Heart left ventricle (tissue), 16 donors: ENCODE measurements at regions of chr1 and their contacts with region 1.

Region 1: DNA sequence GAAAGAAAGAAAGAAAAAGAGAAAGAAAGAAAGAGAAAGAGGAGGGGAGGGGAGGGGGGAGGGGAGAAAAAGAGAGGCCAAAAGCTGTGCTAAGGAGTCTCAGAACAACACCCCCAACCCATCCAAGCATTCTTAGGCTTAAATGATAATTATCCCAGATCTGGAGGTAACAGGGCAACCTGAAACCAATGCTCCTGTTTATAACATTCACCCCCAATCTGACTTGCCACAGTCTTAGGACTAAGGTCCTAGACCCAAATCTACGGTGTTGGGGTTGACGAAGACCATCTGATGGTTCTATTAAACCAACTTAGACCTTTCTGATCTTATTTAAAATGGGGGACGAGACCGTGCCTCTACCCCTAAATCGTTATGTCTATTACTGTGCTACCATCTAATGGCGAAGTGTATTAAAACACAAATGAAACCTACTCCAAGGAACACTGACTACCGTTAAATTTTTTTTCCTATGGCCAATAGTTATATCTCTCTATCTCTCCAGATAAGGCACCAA is 119.3 kb upstream of the CDC42BPA start:
- DNase-seq: no peak
- ATAC-seq: peak; percentile 26 to 81 (median 72)
- H3K4me3 ChIP-seq: peak overlapping the region in 10 of 12 donors; percentile 31 to 59 (median 38)
- H3K27ac ChIP-seq: peak overlapping the region in 2 of 12 donors; percentile 31 to 51
- H3K4me1 ChIP-seq: peaks cover 0 to 69% (median 30%) of the 10 kb centered on the region in 12 donors
- H3K27me3 ChIP-seq: no peaks in the 10 kb centered on the region
- CTCF ChIP-seq: peak; percentile 22 to 74 (median 56)
- POLR2A ChIP-seq: no peak

Region 2: GRCh38 chr1:226634166-226634588 is 803.4 kb before region 1 on chr1:
- intact Hi-C with region 1: loop called in 5 of 10 experiments (anchors 5 to 10 kb)
- DNase-seq: peak; percentile 79 to 90 (median 81)
- ATAC-seq: peak; percentile 76 to 82 (median 80)
- H3K4me3 ChIP-seq: no peak overlapping the region
- H3K27ac ChIP-seq: peak overlapping the region in 9 of 12 donors; percentile 1 to 81 (median 39)
- H3K4me1 ChIP-seq: peaks cover 0 to 45% (median 24%) of the 10 kb centered on the region in 12 donors
- H3K27me3 ChIP-seq: no peaks in the 10 kb centered on the region
- CTCF ChIP-seq: peak; percentile 83 to 99 (median 94)
- POLR2A ChIP-seq: no peak

Region 3: GRCh38 chr1:227131193-227131592 is 306.4 kb before region 1 on chr1:
- intact Hi-C with region 1: loop called in 8 of 10 experiments (anchors 2 to 5 kb)
- DNase-seq: no peak
- ATAC-seq: peak in 2 of 4 donors; percentile 41 to 55
- H3K4me3 ChIP-seq: no peak overlapping the region
- H3K27ac ChIP-seq: no peak overlapping the region
- H3K4me1 ChIP-seq: peaks cover 0 to 12% (median 0%) of the 10 kb centered on the region in 12 donors
- H3K27me3 ChIP-seq: no peaks in the 10 kb centered on the region
- CTCF ChIP-seq: peak; percentile 30 to 66 (median 50)
- POLR2A ChIP-seq: no peak

Region 4: GRCh38 chr1:227234998-227235405 is 202.6 kb before region 1 on chr1:
- intact Hi-C with region 1: loop called in 9 of 10 experiments (anchors 1 to 5 kb)
- DNase-seq: peak in 1 of 5 donors; percentile 18
- ATAC-seq: peak in 3 of 4 donors; percentile 55 to 82 (median 68)
- H3K4me3 ChIP-seq: no peak overlapping the region
- H3K27ac ChIP-seq: no peak overlapping the region
- H3K4me1 ChIP-seq: peaks cover 0 to 17% (median 5%) of the 10 kb centered on the region in 12 donors
- H3K27me3 ChIP-seq: no peaks in the 10 kb centered on the region
- CTCF ChIP-seq: peak; percentile 26 to 60 (median 40)
- POLR2A ChIP-seq: no peak